GM10248 (cell line): ENCODE measurements at regions of chr17 and their contacts with region 1.

Region 1: GRCh38 chr17:42787266-42787665 is 6.9 kb downstream of the WNK4 start:
- DNase-seq: no peak
- CTCF ChIP-seq: no peak

Region 2: DNA sequence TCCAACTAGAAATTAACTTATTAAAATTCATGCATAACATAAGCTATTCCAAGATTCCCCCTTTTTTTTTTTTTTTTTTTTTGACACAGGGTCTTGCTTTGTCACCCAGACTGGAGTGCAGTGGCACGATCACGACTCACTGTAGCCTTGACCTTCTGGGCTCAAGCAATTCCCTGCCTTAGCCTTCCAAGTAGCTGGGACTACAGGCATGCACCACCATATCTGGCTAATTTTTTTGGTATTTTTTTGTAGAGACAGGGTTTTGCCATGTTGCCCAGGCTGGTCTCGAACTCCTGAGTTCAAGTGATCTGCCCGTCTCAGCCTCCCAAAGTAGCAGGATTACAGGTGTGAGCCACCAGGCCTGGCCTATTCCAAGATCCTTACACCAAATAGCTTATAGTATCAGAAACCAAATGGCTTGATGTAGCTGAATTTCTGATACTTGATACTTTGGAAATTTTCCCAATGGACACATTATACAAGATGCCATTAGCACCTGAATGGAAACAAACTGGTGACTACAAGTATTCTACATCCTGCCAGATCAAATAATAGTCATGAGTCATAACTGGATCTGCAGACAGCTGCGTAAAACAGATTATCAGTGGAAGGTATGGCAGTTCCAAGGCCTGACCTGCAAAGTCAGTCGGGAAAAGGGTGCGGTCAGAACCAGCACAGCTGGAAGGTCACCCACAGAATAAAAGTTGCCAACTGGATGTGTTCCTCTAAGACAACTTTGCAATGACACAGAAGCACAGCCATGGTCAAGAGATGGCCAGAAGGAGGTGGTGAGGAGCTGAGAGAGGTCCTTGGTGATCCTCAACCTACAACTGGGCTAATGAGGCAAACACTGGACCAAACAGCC is 163.3 kb before region 1 on chr17:
- CTCF ChIA-PET with region 1: no interaction called
- POLR2A ChIA-PET with region 1: interaction called, 10 read pairs
- DNase-seq: no peak
- CTCF ChIP-seq: no peak

Region 3: DNA sequence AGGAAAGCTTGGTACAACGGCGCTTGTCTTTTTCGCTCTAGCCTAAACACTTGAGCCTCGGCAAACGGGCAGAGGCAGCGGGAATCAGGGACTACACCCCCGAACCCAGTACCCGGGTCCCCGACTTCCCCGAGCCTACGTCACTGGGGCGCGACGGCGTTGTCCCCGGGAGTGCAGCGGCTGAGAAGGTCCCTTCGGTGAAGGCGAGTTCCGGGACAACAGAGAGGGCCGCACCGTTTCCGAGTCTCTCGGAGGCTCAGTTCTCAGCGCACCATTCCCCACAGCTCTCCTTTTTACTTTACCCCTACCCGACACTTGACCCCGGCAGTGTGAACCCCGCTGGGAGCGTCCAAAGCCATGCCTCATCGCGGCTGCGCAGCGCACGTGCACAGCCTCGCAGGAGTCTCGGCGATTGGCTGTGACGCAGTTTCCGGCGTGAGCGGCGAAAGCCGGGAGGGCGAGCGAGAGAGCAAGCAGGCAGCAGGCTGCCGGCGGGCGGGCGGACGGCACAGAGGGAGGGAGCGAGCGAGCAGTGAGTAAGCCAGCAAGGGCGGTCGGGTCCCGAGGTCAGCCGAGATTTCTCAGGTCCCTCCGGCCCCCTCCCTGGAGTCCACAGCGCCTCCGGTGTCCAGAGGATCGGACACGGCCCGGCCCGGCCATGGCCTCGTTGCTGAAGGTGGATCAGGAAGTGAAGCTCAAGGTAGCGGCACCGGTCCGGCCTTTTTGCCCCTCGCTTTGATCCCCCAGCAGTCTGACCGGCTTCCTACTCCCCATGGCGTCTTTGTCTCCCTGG is 45.9 kb after region 1 on chr17 and contains the start of gene PSME3:
- CTCF ChIA-PET with region 1: no interaction called
- POLR2A ChIA-PET with region 1: no interaction called
- DNase-seq: peak; percentile 94
- CTCF ChIP-seq: no peak

Region 4: GRCh38 chr17:42997390-42997983 is 210.2 kb after region 1 on chr17:
- CTCF ChIA-PET with region 1: no interaction called
- POLR2A ChIA-PET with region 1: no interaction called
- DNase-seq: no peak
- CTCF ChIP-seq: no peak